ENCODE measurements at regions of chrX and their contacts with region 1.

Region 1: DNA sequence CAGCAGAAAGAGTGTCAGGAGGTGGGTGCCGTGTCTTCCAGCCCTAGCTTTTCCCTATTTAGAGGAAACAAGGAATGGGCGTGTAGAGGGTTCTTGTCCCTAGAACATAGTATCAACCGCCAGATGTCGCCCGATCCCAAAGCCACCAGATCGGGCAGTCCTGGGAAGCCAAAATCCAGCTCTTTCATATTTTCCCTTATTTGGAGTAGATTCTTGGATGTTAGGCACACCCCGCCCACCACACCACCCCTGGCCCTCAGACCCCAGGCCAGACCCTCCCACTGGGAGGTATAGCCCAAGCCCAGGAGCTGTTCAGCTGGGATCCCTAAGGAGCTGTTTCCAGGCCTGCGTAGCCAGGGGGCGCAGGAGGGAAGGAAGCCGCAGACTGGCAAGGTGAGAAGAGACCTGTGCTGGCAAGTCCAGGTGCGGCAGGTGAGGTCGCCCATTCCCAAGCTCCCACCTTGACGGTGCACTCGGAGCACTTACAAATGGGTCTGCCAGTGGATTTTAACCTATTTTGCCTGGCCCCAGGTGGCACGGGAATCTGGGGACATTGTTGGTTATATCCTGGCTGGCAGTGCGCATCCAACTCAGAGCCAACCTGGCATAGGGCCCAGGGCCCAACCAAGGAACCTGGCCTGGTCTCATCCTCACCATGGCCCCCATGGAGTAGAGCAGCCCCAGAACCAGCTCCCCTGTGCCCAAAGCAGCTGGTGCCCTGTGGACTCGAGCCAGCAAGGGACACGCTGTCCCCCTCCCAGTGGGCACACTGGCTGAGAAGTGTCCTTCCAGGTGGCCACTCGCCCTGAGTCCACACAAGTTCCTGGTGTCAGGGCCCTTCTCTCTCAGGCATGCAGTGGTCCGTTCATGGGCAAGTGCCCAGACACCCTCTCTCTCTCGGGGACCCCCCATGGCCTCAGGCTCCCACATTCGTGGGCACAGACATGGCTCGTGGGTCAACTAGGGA is 811 bp downstream of the FLNA start:
- DNase-seq: peak; percentile 52
- H3K27ac ChIP-seq: peak overlapping the region; percentile 97
- CTCF ChIP-seq: peak; percentile 81

Region 2: GRCh38 chrX:154384284-154384892 is 10.8 kb after region 1 on chrX:
- CTCF ChIA-PET with region 1: interaction called, 13 read pairs
- POLR2A ChIA-PET with region 1: no interaction called
- DNase-seq: no peak
- H3K27ac ChIP-seq: peak overlapping the region; percentile 86
- CTCF ChIP-seq: no peak

Region 3: DNA sequence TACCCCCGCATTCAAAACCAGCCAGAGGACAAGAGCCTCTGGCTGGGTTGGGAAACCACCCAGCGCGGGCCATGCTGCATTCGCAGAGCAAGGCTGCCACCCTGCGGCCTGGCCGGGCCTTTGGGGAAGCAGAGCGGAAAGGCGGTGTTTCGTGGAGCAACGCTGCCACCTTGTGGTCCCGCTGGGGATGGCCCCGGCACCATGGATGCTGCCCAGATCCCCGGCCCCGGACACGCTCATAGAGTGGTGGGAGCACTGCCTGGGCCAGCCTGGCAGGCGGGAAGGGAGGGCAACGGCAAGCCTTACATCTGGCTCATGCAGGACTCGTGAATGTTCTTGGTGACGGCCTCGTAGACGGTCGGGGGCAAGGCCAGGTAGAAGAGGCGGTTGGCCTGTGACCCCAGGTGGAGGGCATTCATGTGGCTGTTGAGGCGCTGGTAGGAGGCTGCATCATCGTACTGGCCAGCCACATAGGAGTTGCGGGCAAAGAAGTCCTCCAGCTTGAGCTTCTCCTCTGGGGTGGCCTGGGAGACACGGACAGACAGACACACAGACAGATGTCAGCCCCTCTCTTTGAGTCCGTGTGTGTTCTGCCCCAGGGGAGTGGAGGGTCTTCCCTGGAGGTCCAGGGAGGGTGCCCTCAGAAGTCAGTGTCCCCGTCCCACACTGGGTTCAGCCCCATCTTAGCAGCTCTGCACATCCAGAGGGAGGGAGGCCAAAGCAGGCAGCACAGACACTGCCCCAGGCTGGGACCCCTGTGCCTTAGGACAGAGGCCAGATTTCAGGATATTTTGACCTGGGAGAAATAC is 161.4 kb after region 1 on chrX:
- CTCF ChIA-PET with region 1: interaction called, 11 read pairs
- POLR2A ChIA-PET with region 1: no interaction called
- DNase-seq: peak; percentile 57
- H3K27ac ChIP-seq: peak overlapping the region; percentile 43
- CTCF ChIP-seq: peak; percentile 87

Region 4: DNA sequence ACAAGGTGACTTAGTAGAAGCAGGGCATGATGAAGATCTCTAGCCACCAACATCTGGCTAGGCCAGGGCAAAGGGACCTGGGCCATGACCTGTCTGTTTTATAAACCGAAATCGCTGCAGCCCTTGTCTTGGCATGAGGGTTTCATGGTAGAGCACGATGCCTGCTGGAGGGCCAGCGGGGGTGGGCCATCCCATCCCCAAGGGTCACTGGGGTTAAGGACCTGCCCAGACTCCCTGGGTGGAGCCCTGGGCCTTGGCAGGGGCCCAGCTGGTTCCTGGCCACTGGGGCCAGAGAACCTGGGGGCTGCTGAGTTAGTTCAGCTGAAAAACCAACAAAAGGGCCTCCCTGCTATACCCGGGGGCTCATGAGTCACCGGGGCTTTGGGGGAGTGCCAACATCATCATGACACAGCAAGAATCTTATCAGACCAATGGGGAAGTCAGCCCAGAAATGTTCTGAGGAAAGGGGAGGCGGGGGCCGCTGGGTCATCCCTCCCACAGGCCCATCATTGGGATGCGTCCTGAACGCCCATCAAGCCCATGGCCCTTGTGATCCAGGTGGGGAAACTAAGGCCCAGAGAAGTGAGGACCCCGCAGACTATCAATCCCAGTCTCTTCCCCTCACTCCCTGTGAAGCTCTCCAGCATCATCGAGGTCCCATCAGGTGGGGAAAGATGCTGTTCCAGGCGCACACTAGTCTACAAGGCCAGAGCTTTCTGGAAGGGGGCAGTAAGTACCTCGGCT is 168.3 kb after region 1 on chrX:
- CTCF ChIA-PET with region 1: interaction called, 12 read pairs
- POLR2A ChIA-PET with region 1: no interaction called
- DNase-seq: peak; percentile 71
- H3K27ac ChIP-seq: peak overlapping the region; percentile 96
- CTCF ChIP-seq: no peak